Activated CD4-positive, alpha-beta T cell treated with anti-CD3 and anti-CD28 coated beads for 36 hours (primary cell): ENCODE measurements at regions of chr19 and their contacts with region 1.

Region 1: GRCh38 chr19:40285353-40286234 is 449 bp upstream of the AKT2 start:
- DNase-seq: peak; percentile 98
- ATAC-seq: peak; percentile 89
- H3K4me3 Mint-ChIP-seq: peak overlapping the region; percentile 95
- H3K27ac Mint-ChIP-seq: peak overlapping the region; percentile 99
- H3K4me1 Mint-ChIP-seq: peaks cover 42% of the 10 kb centered on the region
- H3K27me3 Mint-ChIP-seq: no peaks in the 10 kb centered on the region

Region 2: DNA sequence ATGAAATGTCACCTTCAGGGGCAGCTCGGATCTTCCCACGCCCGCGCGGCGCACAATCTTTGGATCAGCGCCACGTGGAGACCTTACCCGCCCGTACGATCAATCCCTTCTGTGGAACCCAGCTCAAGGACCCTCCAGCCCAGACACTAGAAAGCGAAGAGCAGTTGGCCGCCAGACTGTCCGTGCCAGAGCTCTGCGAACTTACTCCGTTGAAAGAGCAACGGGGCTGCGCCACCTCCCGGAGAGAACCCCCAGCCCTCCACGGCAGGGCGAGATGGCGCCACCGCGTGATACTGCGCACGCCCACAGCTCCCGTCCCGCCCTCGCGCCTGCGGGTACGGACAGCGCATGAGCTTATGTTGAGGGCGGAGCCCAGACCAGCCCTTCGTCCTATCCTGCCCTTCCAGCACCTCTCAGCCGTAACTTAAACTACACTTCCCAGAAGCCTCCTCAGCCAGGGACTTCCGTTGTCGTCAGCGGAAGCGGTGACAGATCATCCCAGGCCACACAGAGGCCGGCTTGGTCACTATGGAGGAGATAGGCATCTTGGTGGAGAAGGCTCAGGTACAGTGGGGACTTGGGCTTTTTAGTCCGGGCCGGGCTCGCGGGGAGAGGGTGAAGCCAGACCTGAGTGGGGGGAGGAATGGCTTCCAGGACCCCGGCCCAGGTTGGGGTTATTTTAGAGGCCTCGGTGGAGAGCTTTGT is 314.8 kb before region 1 on chr19 and contains the start of gene PSMC4:
- CTCF ChIA-PET with region 1: no interaction called
- POLR2A ChIA-PET with region 1: no interaction called
- intact Hi-C with region 1: loop called in 1 of 2 experiments (anchors 1 kb)
- DNase-seq: peak; percentile 99
- ATAC-seq: peak; percentile 95
- H3K4me3 Mint-ChIP-seq: peak within 1 kb of the TSS; percentile 89
- H3K27ac Mint-ChIP-seq: peak within 1 kb of the TSS; percentile 96
- H3K4me1 Mint-ChIP-seq: peaks cover 47% of the 10 kb centered on the region
- H3K27me3 Mint-ChIP-seq: no peaks in the 10 kb centered on the region
- total RNA-seq, gene PSMC4: 114 to 140 TPM

Region 3: DNA sequence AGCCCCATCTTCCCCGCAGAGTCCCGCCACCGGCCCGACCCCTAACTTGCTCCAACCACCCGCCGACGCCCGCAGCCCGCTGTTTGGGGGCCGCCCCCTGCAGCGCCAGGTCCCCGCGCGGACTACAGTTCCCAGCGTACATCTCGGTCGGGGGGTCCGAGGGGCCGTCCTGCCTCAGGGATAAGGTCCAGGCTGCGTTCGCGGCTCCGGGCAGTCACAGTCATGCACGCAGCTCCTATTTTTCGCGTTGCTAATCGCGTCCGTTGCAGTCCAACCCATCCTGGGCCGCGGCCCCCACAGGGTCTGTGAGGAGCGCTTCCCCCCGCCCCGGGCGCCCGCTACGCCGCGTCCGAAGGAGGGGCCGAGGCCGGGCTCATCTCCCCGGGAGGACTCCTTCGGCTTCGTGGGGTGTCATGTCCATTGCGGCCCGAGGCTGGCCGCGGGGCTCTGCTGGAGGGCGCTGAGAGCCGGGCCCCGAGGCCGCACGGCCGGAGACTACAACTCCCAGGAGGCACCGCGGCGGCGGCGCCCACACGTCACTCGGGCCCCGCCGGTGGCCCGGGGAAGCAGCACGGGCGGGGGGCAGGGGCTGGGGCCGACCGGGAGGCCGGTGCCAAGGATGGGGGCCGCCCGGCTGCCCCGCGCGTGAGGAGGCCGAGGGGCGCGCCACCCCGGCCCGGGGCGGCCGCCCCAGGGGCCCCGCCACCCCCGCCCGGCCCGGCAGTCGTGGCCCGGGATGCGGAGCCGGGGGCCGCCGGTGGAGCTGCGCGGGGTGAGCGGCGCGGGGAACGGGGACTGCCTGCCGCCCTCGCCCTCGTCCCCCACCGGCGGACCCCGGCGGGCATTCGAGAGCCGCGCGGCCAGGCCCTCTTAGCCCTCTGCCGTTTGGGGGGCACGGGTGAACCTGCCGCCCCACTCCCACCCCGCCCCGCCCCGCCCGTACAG is 94.4 kb before region 1 on chr19 and contains the start of gene MAP3K10:
- CTCF ChIA-PET with region 1: interaction called, 4 read pairs
- POLR2A ChIA-PET with region 1: interaction called, 3 read pairs
- intact Hi-C with region 1: loop called (anchors 1 to 2 kb)
- DNase-seq: peak; percentile 89
- ATAC-seq: peak; percentile 88
- H3K4me3 Mint-ChIP-seq: peak within 1 kb of the TSS; percentile 80
- H3K27ac Mint-ChIP-seq: peak within 1 kb of the TSS; percentile 92
- H3K4me1 Mint-ChIP-seq: peaks cover 20% of the 10 kb centered on the region
- H3K27me3 Mint-ChIP-seq: no peaks in the 10 kb centered on the region
- total RNA-seq, gene MAP3K10: 8.7 to 10.8 TPM

Region 4: DNA sequence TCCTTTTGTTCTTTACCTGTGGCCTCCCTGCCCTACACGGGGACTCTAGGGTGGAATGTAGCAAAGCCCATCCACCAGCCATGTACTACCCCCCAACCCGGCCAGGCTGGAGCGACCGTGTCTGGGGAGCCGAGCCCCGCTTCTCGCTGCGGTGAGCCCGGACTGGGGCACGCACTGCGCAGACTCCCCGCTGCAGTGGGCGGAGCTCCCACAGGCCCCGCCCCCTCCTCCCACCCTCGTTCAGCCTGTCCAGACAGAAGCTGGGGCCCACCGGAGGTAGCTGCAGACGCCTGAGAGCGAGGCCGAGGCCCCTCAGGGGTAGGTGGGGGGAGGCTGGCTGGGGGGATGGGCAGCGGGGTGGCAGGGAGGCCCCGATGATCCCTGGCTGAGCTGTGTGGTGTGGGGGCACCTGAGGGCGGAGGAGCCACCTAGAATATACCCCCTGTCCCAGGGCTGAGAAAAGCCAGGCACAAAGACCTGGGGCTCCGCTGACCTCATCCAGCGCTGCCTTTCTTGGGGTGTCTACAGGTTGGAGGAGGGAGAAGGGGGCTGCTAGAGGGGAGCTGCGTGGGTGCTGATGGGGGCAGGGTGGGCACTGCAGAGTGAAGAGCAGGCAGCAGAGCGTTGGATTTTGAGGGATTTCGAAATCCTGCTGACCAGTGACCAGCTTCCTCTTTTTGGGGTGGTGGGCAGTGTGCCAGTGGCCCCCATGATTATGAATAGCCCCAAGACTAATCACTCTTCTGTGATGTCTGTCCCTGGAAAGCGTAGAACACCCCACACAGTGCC is 80.2 kb after region 1 on chr19:
- CTCF ChIA-PET with region 1: no interaction called
- POLR2A ChIA-PET with region 1: no interaction called
- intact Hi-C with region 1: no loop called
- DNase-seq: peak; percentile 79
- ATAC-seq: peak; percentile 97
- H3K4me3 Mint-ChIP-seq: peak overlapping the region; percentile 59
- H3K27ac Mint-ChIP-seq: no peak overlapping the region
- H3K4me1 Mint-ChIP-seq: peaks cover 13% of the 10 kb centered on the region
- H3K27me3 Mint-ChIP-seq: no peaks in the 10 kb centered on the region

Region 5: DNA sequence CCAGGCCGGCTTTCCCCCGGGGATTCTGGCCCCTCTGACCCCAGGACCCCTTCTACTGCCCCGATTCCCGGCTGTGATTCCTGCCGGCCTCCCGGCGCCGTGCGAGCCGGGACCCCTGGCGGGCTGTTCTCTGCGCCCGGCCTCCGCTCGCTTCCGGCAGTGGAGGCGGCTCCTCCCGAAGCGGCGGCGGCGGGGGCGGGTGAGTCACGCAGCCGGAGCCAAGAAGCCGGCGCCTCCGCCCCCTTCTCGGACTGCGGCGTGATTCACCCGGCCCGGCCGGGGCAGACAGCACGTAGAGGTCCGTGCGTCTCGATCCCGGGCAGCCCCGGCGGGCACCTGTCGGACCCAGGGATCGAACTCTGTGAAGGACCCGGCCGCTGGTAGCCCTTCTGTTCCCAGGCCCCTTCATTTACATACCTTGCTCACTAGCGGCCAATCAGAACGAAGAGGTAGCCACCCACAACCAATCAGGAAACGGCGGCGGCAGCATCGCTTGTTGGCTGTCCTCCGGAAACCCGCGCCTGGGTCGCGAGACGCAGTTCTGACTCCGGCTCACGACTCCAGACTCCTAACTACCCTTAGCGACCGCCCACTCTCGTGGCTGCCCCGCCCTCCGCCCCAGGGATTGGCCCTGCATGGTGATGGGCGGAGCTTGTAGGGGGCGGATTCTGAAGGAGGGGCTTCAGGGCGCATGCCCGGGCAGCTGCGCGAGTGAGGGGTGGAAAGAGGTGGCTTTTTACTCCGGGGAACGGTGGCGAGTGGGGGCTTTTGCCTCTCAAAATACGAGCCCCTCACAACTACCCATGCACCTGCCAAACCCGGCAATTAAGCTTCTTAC is 140.1 kb after region 1 on chr19 and contains the start of gene SERTAD1:
- CTCF ChIA-PET with region 1: no interaction called
- POLR2A ChIA-PET with region 1: interaction called, 3 read pairs
- intact Hi-C with region 1: loop called in 1 of 2 experiments (anchors 1 kb)
- DNase-seq: peak; percentile 100
- ATAC-seq: peak; percentile 91
- H3K4me3 Mint-ChIP-seq: peak within 1 kb of the TSS; percentile 89
- H3K27ac Mint-ChIP-seq: peak within 1 kb of the TSS; percentile 96
- H3K4me1 Mint-ChIP-seq: peaks cover 20% of the 10 kb centered on the region
- H3K27me3 Mint-ChIP-seq: no peaks in the 10 kb centered on the region
- total RNA-seq, gene SERTAD1: 10.0 to 14.7 TPM

Region 6: GRCh38 chr19:40576585-40577451 is 291.2 kb after region 1 on chr19 and contains the start of gene SHKBP1:
- CTCF ChIA-PET with region 1: no interaction called
- POLR2A ChIA-PET with region 1: no interaction called
- intact Hi-C with region 1: loop called in 1 of 2 experiments (anchors 1 kb)
- DNase-seq: peak; percentile 96
- ATAC-seq: peak; percentile 100
- H3K4me3 Mint-ChIP-seq: peak within 1 kb of the TSS; percentile 85
- H3K27ac Mint-ChIP-seq: peak within 1 kb of the TSS; percentile 74
- H3K4me1 Mint-ChIP-seq: peaks cover 16% of the 10 kb centered on the region
- H3K27me3 Mint-ChIP-seq: no peaks in the 10 kb centered on the region
- total RNA-seq, gene SHKBP1: 100 to 155 TPM

Region 7: GRCh38 chr19:40690693-40691420 is 405.3 kb after region 1 on chr19:
- CTCF ChIA-PET with region 1: no interaction called
- POLR2A ChIA-PET with region 1: no interaction called
- intact Hi-C with region 1: loop called in 1 of 2 experiments (anchors 1 kb)
- DNase-seq: peak; percentile 97
- ATAC-seq: peak; percentile 85
- H3K4me3 Mint-ChIP-seq: peak overlapping the region; percentile 80
- H3K27ac Mint-ChIP-seq: peak overlapping the region; percentile 87
- H3K4me1 Mint-ChIP-seq: peaks cover 5% of the 10 kb centered on the region
- H3K27me3 Mint-ChIP-seq: no peaks in the 10 kb centered on the region

Region 8: GRCh38 chr19:40798223-40798996 is 512.8 kb after region 1 on chr19:
- CTCF ChIA-PET with region 1: no interaction called
- POLR2A ChIA-PET with region 1: no interaction called
- intact Hi-C with region 1: loop called in 1 of 2 experiments (anchors 10 kb)
- DNase-seq: peak; percentile 100
- ATAC-seq: peak; percentile 82
- H3K4me3 Mint-ChIP-seq: peak overlapping the region; percentile 91
- H3K27ac Mint-ChIP-seq: peak overlapping the region; percentile 97
- H3K4me1 Mint-ChIP-seq: peaks cover 49% of the 10 kb centered on the region
- H3K27me3 Mint-ChIP-seq: no peaks in the 10 kb centered on the region

Region 9: GRCh38 chr19:41978470-41978869 is 1692.9 kb after region 1 on chr19:
- CTCF ChIA-PET with region 1: no interaction called
- POLR2A ChIA-PET with region 1: no interaction called
- intact Hi-C with region 1: no loop called
- DNase-seq: no peak
- ATAC-seq: no peak
- H3K4me3 Mint-ChIP-seq: no peak overlapping the region
- H3K27ac Mint-ChIP-seq: no peak overlapping the region
- H3K4me1 Mint-ChIP-seq: no peaks in the 10 kb centered on the region
- H3K27me3 Mint-ChIP-seq: no peaks in the 10 kb centered on the region